ENCODE measurements at regions of chr20 and their contacts with region 1.

Region 1: DNA sequence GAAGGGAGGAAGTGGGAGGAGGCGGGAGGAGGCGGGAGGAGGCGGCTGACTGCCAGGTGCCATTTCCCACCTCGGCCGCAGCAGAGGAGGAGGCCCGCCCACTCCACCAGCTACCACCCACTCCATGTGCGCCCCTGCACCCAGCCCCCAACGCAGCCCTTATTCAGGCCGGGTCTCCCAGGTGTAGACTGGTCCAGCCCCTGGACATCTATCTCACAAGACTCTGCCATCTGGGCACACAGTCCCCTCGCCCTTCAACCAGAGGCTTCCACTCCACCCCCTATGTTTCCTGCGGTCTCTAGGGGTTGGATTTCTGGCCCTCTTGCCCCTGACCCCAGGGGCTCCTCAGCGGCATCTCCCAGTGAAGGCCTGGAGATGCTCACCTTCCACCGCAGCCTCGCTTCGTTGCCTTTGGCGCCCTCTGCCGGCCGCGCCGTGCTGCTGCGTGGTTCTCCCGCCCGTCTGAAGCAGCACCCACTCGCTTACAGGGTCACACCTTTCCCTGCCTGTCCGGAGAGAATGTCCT is 32.6 kb upstream of the FAM83D start:
- DNase-seq: peak; percentile 89
- H3K4me3 Mint-ChIP-seq: peak overlapping the region; percentile 41
- H3K27ac Mint-ChIP-seq: peak overlapping the region; percentile 88
- H3K4me1 Mint-ChIP-seq: peaks cover 61% of the 10 kb centered on the region
- H3K27me3 Mint-ChIP-seq: no peaks in the 10 kb centered on the region

Region 2: GRCh38 chr20:38680500-38681306 is 212.9 kb before region 1 on chr20:
- CTCF ChIA-PET with region 1: no interaction called
- POLR2A ChIA-PET with region 1: no interaction called
- intact Hi-C with region 1: no loop called
- DNase-seq: peak; percentile 40
- H3K4me3 Mint-ChIP-seq: no peak overlapping the region
- H3K27ac Mint-ChIP-seq: no peak overlapping the region
- H3K4me1 Mint-ChIP-seq: no peaks in the 10 kb centered on the region
- H3K27me3 Mint-ChIP-seq: peaks cover 41% of the 10 kb centered on the region

Region 3: DNA sequence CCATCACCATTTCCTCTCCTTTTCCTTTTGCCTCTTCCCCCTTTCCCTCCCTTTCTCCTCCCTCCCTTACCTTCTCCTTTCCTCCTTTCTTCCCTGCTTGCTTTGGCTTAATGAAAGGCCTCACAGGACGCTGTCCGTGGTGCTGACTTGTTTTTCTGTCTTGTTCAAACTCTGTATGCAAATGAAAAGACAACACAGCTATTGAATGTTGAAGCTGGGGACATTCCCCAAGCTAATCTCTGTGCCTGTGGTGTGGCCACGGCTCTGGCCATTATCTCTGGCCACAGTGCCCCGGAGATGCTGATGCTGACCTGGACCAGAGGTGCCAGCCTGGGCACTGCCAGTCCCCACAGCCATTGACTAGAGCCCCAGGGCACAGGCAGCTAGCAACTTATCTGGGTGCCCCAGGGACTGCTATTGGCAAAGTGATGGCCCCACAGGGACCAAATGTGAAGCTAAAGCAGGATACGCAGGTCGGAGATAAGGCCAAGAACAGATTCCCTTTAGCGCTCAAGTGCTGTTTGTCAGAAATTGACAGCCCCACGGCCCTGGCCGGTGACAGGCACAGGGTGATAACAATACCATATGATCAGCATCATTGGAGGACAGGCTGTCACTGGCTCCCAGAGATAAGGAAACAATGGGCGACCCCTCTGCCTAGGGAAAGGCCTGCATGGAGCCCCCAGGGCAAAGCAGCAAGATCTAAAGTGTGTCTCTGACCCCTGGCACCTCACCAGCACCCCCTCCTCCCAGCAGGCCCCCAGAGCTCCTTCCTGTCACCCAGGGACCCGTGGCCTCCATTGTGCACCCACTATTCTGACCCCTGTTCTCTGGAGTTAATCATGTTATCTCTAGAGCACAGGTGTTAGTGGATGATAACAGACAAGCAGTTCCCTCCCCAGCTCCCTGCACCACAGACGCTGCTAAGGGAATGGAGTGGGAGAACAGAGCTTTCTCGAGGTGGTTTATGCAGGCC is 200.9 kb before region 1 on chr20:
- CTCF ChIA-PET with region 1: no interaction called
- POLR2A ChIA-PET with region 1: no interaction called
- intact Hi-C with region 1: no loop called
- DNase-seq: peak; percentile 59
- H3K4me3 Mint-ChIP-seq: no peak overlapping the region
- H3K27ac Mint-ChIP-seq: no peak overlapping the region
- H3K4me1 Mint-ChIP-seq: no peaks in the 10 kb centered on the region
- H3K27me3 Mint-ChIP-seq: peaks cover 18% of the 10 kb centered on the region

Region 4: DNA sequence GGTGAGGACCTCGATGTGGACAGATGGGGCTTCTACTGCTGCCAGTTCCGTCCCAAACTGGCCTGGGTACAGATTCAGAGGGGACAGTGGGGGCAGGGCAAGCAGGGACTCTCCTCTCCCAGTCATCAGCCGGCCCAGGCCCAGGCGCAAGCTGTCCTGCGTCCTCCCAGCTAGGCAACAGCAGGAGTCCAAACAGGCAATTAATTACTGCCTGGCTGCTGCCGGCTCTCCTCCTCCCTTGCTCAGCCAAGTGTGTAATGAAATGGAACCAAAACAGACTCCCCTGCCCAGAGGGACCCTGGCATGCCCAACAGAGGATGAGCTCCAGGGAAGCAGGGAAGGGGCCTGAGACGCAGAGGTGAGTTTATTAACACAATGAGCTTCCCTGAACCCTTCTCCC is 187.1 kb before region 1 on chr20:
- CTCF ChIA-PET with region 1: no interaction called
- POLR2A ChIA-PET with region 1: no interaction called
- intact Hi-C with region 1: no loop called
- DNase-seq: no peak
- H3K4me3 Mint-ChIP-seq: no peak overlapping the region
- H3K27ac Mint-ChIP-seq: no peak overlapping the region
- H3K4me1 Mint-ChIP-seq: no peaks in the 10 kb centered on the region
- H3K27me3 Mint-ChIP-seq: peaks cover 32% of the 10 kb centered on the region

Region 5: DNA sequence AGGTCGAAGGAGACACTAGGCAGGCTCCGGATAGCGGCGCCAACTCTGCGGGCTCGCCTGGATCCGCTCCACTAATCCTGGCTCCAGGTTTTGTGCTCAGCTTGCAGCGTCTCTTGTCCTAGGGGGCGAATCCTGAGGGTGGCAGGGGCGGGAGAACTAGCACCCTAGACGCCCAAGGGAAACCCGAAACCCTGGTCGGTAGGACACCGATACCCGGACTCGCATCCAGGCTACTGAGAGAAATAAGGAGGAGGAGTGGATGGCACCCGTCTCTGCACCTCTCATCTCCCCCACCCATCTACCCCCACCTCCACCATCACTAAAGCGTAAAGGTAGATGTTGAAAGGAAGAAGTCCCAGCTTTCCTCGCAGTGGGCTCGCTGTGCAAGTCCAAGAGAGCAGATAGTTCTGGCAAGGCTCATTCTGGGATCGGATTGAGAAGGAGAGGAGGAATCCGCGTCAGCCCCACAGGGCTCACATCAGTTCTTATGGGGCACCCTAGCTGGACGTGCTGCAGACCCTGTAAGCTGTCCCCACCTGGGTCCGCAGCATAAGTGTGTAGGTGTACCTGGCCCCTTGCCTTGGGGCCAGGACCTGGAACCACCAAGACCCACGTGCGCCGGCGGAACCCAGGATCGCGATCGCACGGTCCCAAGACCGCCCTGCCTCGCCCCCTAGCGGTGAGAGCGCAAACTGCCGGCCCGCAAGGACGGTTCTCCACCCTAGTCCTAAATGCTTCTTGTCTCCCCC is 162.5 kb before region 1 on chr20:
- CTCF ChIA-PET with region 1: interaction called, 12 read pairs
- POLR2A ChIA-PET with region 1: no interaction called
- intact Hi-C with region 1: loop called (anchors 2 kb)
- DNase-seq: peak; percentile 85
- H3K4me3 Mint-ChIP-seq: peak overlapping the region; percentile 58
- H3K27ac Mint-ChIP-seq: peak overlapping the region; percentile 52
- H3K4me1 Mint-ChIP-seq: peaks cover 42% of the 10 kb centered on the region
- H3K27me3 Mint-ChIP-seq: peaks cover 85% of the 10 kb centered on the region

Region 6: GRCh38 chr20:38764567-38765355 is 128.9 kb before region 1 on chr20:
- CTCF ChIA-PET with region 1: interaction called, 13 read pairs
- POLR2A ChIA-PET with region 1: no interaction called
- intact Hi-C with region 1: no loop called
- DNase-seq: peak; percentile 79
- H3K4me3 Mint-ChIP-seq: no peak overlapping the region
- H3K27ac Mint-ChIP-seq: peak overlapping the region; percentile 71
- H3K4me1 Mint-ChIP-seq: peaks cover 26% of the 10 kb centered on the region
- H3K27me3 Mint-ChIP-seq: no peaks in the 10 kb centered on the region

Region 7: GRCh38 chr20:38833857-38834164 is 59.8 kb before region 1 on chr20:
- CTCF ChIA-PET with region 1: interaction called, 11 read pairs
- POLR2A ChIA-PET with region 1: no interaction called
- intact Hi-C with region 1: loop called (anchors 2 kb)
- DNase-seq: peak; percentile 72
- H3K4me3 Mint-ChIP-seq: peak overlapping the region; percentile 43
- H3K27ac Mint-ChIP-seq: peak overlapping the region; percentile 92
- H3K4me1 Mint-ChIP-seq: peaks cover 80% of the 10 kb centered on the region
- H3K27me3 Mint-ChIP-seq: no peaks in the 10 kb centered on the region

Region 8: GRCh38 chr20:38875175-38875993 is 18.2 kb before region 1 on chr20:
- CTCF ChIA-PET with region 1: interaction called, 34 read pairs
- POLR2A ChIA-PET with region 1: interaction called, 28 read pairs
- intact Hi-C with region 1: loop called (anchors 1 kb)
- DNase-seq: peak; percentile 73
- H3K4me3 Mint-ChIP-seq: peak overlapping the region; percentile 69
- H3K27ac Mint-ChIP-seq: peak overlapping the region; percentile 94
- H3K4me1 Mint-ChIP-seq: peaks cover 88% of the 10 kb centered on the region
- H3K27me3 Mint-ChIP-seq: no peaks in the 10 kb centered on the region

Region 9: GRCh38 chr20:38935285-38935684 is 41.7 kb after region 1 on chr20:
- CTCF ChIA-PET with region 1: no interaction called
- POLR2A ChIA-PET with region 1: no interaction called
- intact Hi-C with region 1: no loop called
- DNase-seq: no peak
- H3K4me3 Mint-ChIP-seq: no peak overlapping the region
- H3K27ac Mint-ChIP-seq: no peak overlapping the region
- H3K4me1 Mint-ChIP-seq: no peaks in the 10 kb centered on the region
- H3K27me3 Mint-ChIP-seq: no peaks in the 10 kb centered on the region

Measured in activated CD4-positive, alpha-beta memory T cell treated with anti-CD3 and anti-CD28 coated beads for 36 hours (primary cell).